Activated CD4-positive, alpha-beta T cell treated with anti-CD3 and anti-CD28 coated beads, Interleukin-2, amount 10 ng/mL, durations not matched to agents 7 days and 5 days (primary cell): ENCODE measurements at regions of chr14 and their contacts with region 1.

Region 1: DNA sequence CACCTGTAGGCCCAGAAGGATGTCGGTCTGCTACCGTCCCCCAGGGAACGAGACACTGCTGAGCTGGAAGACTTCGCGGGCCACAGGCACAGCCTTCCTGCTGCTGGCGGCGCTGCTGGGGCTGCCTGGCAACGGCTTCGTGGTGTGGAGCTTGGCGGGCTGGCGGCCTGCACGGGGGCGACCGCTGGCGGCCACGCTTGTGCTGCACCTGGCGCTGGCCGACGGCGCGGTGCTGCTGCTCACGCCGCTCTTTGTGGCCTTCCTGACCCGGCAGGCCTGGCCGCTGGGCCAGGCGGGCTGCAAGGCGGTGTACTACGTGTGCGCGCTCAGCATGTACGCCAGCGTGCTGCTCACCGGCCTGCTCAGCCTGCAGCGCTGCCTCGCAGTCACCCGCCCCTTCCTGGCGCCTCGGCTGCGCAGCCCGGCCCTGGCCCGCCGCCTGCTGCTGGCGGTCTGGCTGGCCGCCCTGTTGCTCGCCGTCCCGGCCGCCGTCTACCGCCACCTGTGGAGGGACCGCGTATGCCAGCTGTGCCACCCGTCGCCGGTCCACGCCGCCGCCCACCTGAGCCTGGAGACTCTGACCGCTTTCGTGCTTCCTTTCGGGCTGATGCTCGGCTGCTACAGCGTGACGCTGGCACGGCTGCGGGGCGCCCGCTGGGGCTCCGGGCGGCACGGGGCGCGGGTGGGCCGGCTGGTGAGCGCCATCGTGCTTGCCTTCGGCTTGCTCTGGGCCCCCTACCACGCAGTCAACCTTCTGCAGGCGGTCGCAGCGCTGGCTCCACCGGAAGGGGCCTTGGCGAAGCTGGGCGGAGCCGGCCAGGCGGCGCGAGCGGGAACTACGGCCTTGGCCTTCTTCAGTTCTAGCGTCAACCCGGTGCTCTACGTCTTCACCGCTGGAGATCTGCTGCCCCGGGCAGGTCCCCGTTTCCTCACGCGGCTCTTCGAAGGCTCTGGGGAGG is at the start of gene LTB4R:
- DNase-seq: peak; percentile 62
- H3K4me3 Mint-ChIP-seq: peak within 1 kb of the TSS; percentile 77
- H3K27ac Mint-ChIP-seq: peak within 1 kb of the TSS; percentile 87
- H3K4me1 Mint-ChIP-seq: peaks cover 81% of the 10 kb centered on the region
- H3K27me3 Mint-ChIP-seq: no peaks in the 10 kb centered on the region
- total RNA-seq, gene LTB4R: 26.6 to 28.3 TPM

Region 2: DNA sequence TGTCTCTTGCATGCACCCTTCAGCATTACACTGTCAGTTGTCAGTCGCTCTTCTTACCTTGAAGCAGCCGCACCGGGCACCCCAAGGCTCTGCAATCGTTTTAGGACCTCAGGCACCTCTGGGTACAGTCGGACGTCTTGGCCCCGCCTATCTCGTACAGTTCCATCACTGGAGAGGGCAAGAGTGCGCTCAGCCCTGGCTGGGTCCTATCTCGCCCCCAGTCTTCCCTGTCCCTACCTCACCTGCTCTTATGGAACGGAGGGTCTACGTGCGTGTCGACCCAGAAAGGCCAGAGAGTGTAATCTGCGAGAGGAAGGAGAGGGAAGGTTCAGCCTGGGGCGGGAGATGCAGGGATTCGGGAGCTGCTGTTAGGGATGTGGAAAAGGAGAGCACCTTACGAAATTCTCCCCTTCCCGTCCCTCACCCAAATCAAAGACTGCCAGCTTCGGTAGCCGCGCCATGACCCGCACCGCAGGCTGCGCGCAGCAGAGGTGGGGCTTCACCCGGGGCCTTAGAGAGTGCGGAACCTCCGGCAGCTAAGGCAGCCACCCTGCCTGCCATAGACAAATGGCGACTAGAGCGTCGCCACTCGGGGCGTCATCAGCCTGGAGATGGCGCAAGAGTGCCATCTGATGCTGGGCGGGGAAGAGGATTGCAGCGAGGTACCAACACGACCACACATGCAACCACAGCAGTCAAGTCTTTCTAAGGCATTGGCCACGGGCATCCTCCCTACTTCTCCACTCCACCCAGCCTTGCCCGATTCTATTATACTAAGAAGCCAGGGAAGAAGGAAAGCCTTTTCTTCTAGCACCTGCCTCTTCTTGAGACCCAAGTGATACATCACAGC is 95.2 kb before region 1 on chr14 and contains the start of gene MDP1:
- CTCF ChIA-PET with region 1: interaction called, 12 read pairs
- POLR2A ChIA-PET with region 1: no interaction called
- DNase-seq: peak; percentile 92
- H3K4me3 Mint-ChIP-seq: peak within 1 kb of the TSS; percentile 92
- H3K27ac Mint-ChIP-seq: peak within 1 kb of the TSS; percentile 95
- H3K4me1 Mint-ChIP-seq: peaks cover 50% of the 10 kb centered on the region
- H3K27me3 Mint-ChIP-seq: no peaks in the 10 kb centered on the region
- total RNA-seq, gene MDP1: 10.1 to 10.7 TPM

Region 3: DNA sequence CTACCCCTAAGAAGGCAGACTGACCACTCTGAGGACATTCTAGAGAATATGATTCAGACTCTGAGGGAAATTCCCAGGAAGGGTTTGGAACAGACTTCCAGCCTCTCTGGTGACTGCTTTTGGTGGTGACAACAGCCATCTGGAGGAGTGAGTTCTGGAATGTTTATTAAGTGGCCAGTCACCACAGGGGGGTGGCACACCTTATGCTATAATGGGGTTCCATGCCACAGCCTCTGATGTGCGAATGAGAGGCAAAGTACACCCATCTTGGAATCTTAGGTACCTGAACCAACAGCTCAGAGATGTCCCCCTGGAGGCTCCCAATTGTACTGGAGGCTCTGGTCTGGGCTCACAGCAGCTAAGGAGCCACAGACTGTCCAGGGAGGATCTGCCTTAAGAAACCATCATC is 59.0 kb before region 1 on chr14:
- CTCF ChIA-PET with region 1: interaction called, 16 read pairs
- POLR2A ChIA-PET with region 1: interaction called, 3 read pairs
- DNase-seq: no peak
- H3K4me3 Mint-ChIP-seq: no peak overlapping the region
- H3K27ac Mint-ChIP-seq: peak overlapping the region; percentile 28
- H3K4me1 Mint-ChIP-seq: peaks cover 43% of the 10 kb centered on the region
- H3K27me3 Mint-ChIP-seq: no peaks in the 10 kb centered on the region

Region 4: GRCh38 chr14:24289649-24290249 is 21.2 kb before region 1 on chr14:
- CTCF ChIA-PET with region 1: interaction called, 41 read pairs
- POLR2A ChIA-PET with region 1: no interaction called
- DNase-seq: peak; percentile 50
- H3K4me3 Mint-ChIP-seq: no peak overlapping the region
- H3K27ac Mint-ChIP-seq: no peak overlapping the region
- H3K4me1 Mint-ChIP-seq: peaks cover 27% of the 10 kb centered on the region
- H3K27me3 Mint-ChIP-seq: peaks cover 2% of the 10 kb centered on the region

Region 5: GRCh38 chr14:24332268-24332993 is 21.5 kb after region 1 on chr14:
- CTCF ChIA-PET with region 1: interaction called, 136 read pairs
- POLR2A ChIA-PET with region 1: no interaction called
- DNase-seq: peak; percentile 92
- H3K4me3 Mint-ChIP-seq: peak overlapping the region; percentile 30
- H3K27ac Mint-ChIP-seq: peak overlapping the region; percentile 74
- H3K4me1 Mint-ChIP-seq: peaks cover 64% of the 10 kb centered on the region
- H3K27me3 Mint-ChIP-seq: peaks cover 38% of the 10 kb centered on the region